Common myeloid progenitor, CD34-positive (primary cell): ENCODE measurements at regions of chr3 and their contacts with region 1.

Region 1: DNA sequence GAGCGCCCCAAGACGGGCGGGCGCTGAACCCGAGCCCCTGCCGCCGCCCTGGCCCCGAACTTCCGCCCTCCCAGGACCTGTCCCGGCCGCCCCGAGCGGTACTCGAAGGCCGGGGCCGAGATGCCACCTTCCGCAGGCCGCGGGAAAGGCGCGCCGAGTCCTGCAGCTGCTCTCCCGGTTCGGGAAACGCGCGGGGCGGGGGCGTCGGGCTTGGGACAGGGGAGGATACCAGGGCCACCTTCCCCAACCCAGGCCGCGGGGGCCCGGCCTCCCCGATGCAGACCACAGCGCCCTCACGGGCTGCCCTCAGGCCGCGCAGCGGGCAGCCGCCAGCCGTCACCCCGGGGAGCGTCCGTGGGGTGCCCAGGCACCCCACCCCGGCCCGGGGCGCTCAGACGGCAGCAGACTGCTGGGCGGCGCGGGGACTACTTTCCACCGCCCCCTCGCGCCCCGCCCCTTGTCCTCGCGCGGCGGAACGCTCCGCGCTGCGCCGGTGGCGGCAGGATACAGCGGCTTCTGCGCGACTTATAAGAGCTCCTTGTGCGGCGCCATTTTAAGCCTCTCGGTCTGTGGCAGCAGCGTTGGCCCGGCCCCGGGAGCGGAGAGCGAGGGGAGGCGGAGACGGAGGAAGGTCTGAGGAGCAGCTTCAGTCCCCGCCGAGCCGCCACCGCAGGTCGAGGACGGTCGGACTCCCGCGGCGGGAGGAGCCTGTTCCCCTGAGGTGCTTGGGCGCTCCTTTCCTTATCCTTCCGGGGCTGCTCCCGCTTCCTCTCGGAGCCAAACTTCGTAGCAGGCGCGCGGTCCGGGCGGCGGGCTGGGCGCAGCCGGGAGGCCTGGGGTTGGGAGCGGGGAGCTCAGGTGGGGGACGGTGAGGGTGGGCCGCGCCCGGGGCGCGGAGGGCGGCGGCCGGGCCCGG is at the start of gene CTNNB1:
- DNase-seq: peak; percentile 96 to 98 (median 98)
- H3K4me3 ChIP-seq: peak within 1 kb of the TSS; percentile 84 to 97 (median 88)
- H3K27ac ChIP-seq: peak within 1 kb of the TSS; percentile 89 to 97
- H3K4me1 ChIP-seq: peaks cover 14 to 42% (median 26%) of the 10 kb centered on the region in 4 experiments
- H3K27me3 ChIP-seq: no peaks in the 10 kb centered on the region

Region 2: DNA sequence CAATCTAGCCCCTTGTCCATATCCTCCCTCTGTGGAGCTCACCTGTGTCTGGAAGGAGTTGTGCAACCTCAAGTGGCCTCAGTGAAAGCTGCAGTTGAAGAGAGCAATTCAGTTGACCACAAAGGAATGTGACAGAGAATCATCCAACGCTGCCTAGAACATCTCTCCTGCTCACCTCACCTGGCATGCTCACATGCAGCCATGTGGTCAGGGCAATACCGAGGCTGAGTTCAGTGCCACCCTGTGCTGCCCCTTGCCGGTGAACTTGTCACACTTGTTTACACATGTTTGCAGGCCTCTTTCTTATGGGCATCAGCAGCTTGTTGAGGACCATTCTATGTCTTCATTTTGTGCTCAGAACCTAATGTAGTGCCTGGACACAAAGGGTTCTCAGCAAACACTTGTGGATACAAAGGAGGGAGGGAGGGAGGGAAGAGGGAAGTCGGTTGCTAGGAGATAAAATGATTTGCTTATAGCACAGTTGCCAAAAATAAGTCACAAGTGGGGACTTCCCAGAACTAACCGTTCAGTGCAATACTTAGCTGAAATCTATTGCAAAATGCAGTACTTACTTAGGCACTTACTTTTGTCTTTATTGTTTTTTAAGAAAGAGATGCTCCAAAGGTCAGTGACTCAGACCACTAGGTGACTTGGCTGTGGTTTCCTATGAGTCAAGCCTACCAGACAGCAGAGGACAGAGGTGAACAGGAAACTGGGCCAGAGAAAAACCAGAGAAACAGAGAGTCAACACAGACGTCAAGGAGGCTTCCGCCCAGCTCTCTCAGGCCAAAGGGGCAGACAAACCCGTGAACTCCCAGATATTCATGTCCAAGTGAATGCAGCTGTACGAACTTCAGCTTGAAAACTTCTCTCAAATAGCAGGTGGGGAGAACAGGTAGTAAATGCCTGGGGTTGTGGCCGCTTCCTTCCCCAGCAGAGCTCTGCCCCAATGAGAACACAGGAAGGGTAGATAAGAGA is 227.7 kb before region 1 on chr3:
- CTCF ChIA-PET with region 1: no interaction called
- POLR2A ChIA-PET with region 1: interaction called, 15 read pairs
- DNase-seq: peak; percentile 75 to 96 (median 92)
- H3K4me3 ChIP-seq: peak overlapping the region in 2 of 7 experiments; percentile 12 to 58
- H3K27ac ChIP-seq: peak overlapping the region; percentile 90 to 93
- H3K4me1 ChIP-seq: peaks cover 8 to 34% (median 30%) of the 10 kb centered on the region in 4 experiments
- H3K27me3 ChIP-seq: peaks cover 0 to 2% (median 0%) of the 10 kb centered on the region in 5 experiments

Region 3: DNA sequence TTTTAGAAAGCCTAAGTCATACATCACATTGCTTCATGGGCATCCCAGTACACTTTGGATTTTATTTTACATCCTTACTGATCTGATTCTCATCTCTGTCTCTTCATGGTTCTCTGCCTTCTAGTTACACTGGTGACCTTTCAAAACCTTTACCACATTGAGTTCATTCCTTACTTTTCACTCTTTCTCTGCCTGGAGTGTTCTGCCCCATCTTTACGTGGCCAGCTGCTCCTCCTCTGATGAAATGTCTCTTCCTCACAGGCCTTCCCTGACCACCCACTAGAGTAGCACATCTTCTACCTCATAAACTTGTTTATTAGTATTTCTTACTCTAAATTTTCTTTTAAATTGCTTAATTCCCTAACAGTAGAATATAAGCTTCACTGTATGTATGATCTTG is 17.8 kb after region 1 on chr3:
- CTCF ChIA-PET with region 1: interaction called, 12 read pairs
- POLR2A ChIA-PET with region 1: interaction called, 10 read pairs
- DNase-seq: no peak
- H3K4me3 ChIP-seq: no peak overlapping the region
- H3K27ac ChIP-seq: peak overlapping the region in 1 of 2 experiments; percentile 31
- H3K4me1 ChIP-seq: peaks cover 0 to 4% (median 2%) of the 10 kb centered on the region in 4 experiments
- H3K27me3 ChIP-seq: no peaks in the 10 kb centered on the region

Region 4: DNA sequence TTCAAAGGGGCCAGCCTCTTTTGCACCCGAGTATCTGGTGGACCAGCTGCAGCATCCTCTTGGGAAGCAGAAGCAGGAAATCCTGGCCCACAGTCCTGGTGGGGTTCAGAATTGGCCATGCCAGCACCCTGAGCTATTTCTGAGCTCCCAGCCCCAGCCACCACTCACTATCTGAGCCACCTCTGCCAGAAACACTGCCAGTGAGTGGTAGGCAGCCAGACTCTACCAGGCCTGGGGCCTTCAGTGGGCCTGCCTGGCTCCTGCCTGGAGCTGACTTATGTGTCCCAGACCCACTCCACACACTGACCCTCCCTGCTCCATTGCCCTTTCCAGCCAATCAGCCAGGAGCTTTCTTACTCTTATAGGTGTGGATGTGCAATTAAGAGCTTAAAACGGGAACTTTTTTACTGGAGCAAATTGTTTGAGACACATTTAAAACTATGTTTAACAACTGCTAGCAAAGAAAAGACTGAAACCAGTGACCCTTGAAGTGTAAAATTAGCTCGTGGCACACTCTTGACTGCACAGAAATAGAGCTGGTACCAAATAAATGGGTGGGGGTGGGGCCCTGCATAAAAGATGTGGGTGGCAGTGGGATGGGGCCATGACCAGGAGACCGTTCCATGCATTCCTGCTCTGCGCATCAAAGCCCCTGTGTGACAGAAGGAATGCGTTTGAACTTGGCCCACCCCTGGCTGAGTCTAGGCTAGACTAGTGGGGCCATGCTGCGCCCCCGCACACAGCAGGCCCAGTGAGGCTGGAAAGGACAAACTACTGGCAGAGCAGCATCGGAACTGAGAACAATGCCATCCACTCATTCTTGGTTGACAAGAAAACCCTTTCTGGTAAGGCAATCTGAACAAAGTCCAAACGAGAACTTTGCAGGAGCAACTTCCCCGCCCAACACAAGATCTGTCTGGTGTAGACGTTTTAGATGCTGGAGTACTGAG is 48.1 kb after region 1 on chr3:
- CTCF ChIA-PET with region 1: no interaction called
- POLR2A ChIA-PET with region 1: no interaction called
- DNase-seq: no peak
- H3K4me3 ChIP-seq: no peak overlapping the region
- H3K27ac ChIP-seq: no peak overlapping the region
- H3K4me1 ChIP-seq: no peaks in the 10 kb centered on the region
- H3K27me3 ChIP-seq: no peaks in the 10 kb centered on the region

Region 5: DNA sequence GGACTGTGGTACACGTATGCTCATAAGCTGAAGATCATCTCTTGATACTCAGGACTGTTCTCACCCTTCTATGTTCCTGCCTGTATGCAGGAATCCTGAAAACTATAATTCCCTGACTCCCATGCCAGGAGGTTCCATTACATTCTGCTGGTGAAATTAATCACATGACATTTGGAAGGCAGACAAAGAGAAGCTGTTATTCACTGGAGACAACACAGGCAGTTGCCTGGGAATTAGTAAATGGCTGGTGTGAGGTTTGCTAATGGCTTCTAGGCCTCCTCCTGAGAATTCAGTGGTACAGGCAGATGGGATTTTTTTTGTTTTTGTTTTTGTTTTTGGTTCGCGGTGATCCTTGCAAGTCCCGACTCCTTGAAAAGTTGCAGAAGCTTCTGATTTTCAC is 91.5 kb after region 1 on chr3:
- CTCF ChIA-PET with region 1: no interaction called
- POLR2A ChIA-PET with region 1: no interaction called
- DNase-seq: no peak
- H3K4me3 ChIP-seq: no peak overlapping the region
- H3K27ac ChIP-seq: no peak overlapping the region
- H3K4me1 ChIP-seq: no peaks in the 10 kb centered on the region
- H3K27me3 ChIP-seq: no peaks in the 10 kb centered on the region

Region 6: GRCh38 chr3:41327718-41328117 is 128.5 kb after region 1 on chr3:
- CTCF ChIA-PET with region 1: no interaction called
- POLR2A ChIA-PET with region 1: no interaction called
- DNase-seq: no peak
- H3K4me3 ChIP-seq: no peak overlapping the region
- H3K27ac ChIP-seq: no peak overlapping the region
- H3K4me1 ChIP-seq: peaks cover 0 to 12% (median 6%) of the 10 kb centered on the region in 4 experiments
- H3K27me3 ChIP-seq: no peaks in the 10 kb centered on the region